ENCODE measurements at regions of chr10 and their contacts with region 1.

Region 1: DNA sequence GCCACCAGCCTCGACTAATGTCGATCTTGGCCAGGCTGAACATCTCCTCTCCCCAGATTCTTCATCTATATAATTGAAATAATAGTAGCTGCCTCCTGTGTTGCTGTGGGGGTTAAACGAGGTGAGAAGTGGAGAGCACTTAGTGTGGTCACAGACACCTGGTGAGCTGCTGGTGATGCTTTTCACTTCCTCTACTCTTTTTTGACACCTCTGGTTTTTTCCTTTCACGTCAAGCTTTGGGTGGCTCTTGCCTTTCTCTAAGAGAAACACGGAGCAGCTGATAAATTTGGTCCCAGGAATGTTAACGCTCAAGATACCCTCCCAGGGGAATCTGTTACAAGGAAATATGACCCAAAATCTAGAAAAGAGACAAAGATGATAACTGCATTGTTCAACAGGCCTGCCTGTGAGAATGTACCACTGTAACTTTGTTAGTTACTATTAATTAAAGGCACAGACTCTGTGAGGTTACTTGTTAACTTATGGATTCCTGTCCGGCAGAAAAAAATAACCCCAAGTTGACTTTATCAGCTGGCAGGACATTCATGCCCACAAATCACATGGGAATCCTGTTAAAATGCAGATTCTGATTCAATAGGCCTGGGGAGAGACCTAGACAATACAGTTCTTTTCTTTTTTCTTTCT is 9.5 kb upstream of the NPFFR1 start:
- DNase-seq: peak; percentile 76
- CTCF ChIP-seq: no peak

Region 2: GRCh38 chr10:70255329-70256299 is 37.7 kb before region 1 on chr10:
- CTCF ChIA-PET with region 1: no interaction called
- POLR2A ChIA-PET with region 1: no interaction called
- DNase-seq: peak; percentile 40
- CTCF ChIP-seq: no peak

Region 3: GRCh38 chr10:70272925-70273316 is 20.4 kb before region 1 on chr10:
- CTCF ChIA-PET with region 1: interaction called, 39 read pairs
- POLR2A ChIA-PET with region 1: no interaction called
- DNase-seq: peak; percentile 75
- CTCF ChIP-seq: peak; percentile 34

Measured in GM10248 (cell line).